ENCODE measurements at regions of chrX and their contacts with region 1.

Region 1: DNA sequence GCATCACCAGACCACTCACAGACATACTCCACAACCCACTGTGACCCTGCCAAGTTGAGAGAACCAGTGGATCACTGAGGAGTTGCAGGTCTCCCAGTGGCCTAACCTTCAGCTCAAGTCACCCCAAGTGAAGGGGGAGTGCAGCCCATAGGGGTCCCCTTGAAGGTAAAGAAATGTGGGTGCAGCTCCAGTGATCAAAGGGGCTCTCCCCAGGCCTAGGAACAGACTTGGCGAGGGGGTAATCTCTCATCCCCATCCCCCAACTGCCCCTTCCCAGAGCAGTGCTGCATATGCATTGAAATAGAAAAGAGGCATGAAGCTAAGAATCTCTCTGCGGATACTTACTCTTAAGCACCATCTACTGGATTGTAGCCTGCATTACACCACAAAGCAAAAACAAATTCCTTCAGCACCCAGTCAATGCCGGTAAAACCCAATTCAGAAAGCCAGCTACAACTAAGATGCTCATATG is 27.0 kb downstream of the MAGEE1 start:
- DNase-seq: no peak
- H3K4me3 Mint-ChIP-seq: no peak overlapping the region
- H3K27ac Mint-ChIP-seq: no peak overlapping the region
- H3K4me1 Mint-ChIP-seq: no peaks in the 10 kb centered on the region
- H3K27me3 Mint-ChIP-seq: no peaks in the 10 kb centered on the region

Region 2: DNA sequence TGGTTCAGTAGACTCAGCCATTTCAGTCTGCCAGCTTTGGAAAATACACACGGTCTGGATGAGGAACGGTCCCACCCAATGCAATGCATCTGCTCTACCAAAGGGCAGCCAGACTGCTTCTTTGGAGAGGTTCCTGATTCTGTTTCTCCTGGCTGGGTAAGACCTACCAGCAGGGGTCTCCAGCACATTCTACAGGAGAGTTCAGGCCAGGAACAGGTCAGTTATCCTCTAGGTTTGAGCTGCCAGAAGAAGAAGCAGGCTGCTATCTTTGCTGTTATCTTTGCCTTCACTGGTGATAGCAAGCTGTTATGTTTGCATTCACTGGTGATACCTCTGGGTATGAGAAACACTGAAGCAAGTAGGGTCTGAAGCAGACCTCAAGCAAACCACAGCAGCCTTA is 327.2 kb before region 1 on chrX:
- intact Hi-C with region 1: no loop called
- DNase-seq: no peak
- H3K4me3 Mint-ChIP-seq: no peak overlapping the region
- H3K27ac Mint-ChIP-seq: no peak overlapping the region
- H3K4me1 Mint-ChIP-seq: no peaks in the 10 kb centered on the region
- H3K27me3 Mint-ChIP-seq: no peaks in the 10 kb centered on the region

Region 3: DNA sequence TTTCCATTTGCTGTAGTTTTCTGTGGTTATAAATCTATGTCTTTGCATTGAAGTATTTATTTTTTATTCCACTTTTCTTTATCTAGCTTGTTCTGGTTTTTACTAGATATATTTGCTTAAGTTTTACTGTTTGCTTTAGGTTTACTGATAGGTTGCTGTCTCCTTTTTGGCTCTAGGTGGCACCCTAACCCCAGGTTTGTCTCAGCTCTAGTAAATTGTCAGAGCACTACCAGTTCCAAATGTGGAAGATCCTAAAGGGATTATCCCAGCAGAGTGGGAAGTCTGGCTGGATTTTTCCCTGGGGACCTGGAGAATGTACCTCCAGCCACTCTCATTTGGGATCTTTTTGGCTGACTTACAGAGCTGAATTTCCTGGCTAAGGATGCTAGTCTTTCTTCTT is 175.5 kb before region 1 on chrX:
- intact Hi-C with region 1: loop called (anchors 2 kb)
- DNase-seq: no peak
- H3K4me3 Mint-ChIP-seq: no peak overlapping the region
- H3K27ac Mint-ChIP-seq: no peak overlapping the region
- H3K4me1 Mint-ChIP-seq: no peaks in the 10 kb centered on the region
- H3K27me3 Mint-ChIP-seq: no peaks in the 10 kb centered on the region

Measured in activated T-helper 2 cell treated with anti-CD3 and anti-CD28 coated beads, Interferon-gamma antibody, Interleukin-2, Interleukin-4, amounts not matched to agents 10 μg/mL and 5 μg/mL and 100 μg/mL, durations not matched to agents 14 hours and 24 hours and 36 hours (primary cell).